Activated CD4-positive, alpha-beta memory T cell treated with anti-CD3 and anti-CD28 coated beads for 36 hours (primary cell): ENCODE measurements at regions of chr6 and their contacts with region 1.

Region 1: DNA sequence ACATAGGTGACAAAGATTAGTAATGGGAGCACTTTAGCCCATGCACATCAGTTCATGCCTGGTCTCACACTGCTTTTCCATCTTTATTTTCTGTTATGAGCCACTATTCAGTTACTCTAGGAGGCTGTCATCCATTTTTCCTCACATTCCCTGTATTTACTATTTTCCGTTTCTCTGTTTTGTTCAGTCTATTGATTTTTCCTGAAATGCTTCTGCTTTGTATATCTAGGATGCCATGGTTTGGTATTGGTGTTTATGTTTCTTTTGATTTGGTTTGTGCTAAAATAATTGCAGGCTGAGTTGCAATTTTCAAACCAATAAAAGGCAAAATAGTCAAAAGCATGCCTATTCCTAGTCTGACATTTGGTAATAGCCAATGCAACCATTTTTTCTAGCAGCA is 28.9 kb upstream of the ZNF292 start:
- DNase-seq: no peak
- H3K4me3 Mint-ChIP-seq: no peak overlapping the region
- H3K27ac Mint-ChIP-seq: no peak overlapping the region
- H3K4me1 Mint-ChIP-seq: no peaks in the 10 kb centered on the region
- H3K27me3 Mint-ChIP-seq: peaks cover 16% of the 10 kb centered on the region

Region 2: DNA sequence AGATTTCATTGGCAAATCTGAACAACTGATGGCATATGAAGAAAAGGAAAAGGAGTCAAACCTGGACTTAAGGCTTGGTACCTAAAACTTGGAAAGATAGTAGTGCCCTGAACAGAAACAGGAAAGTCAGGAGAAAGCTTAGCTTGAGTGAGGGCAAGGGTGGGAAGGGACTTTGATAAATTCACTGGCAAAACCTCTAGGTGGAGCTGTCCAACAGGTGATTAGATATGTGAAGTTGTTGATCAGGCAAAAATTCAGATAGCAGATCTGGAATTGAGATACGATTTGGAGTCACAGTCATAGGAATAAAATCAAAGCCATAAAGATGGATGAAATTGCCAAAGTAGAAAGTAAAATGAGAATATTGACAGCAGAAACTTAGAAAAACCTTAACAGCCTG is 12.7 kb after region 1 on chr6:
- CTCF ChIA-PET with region 1: interaction called, 13 read pairs
- POLR2A ChIA-PET with region 1: no interaction called
- intact Hi-C with region 1: no loop called
- DNase-seq: no peak
- H3K4me3 Mint-ChIP-seq: no peak overlapping the region
- H3K27ac Mint-ChIP-seq: no peak overlapping the region
- H3K4me1 Mint-ChIP-seq: peaks cover 2% of the 10 kb centered on the region
- H3K27me3 Mint-ChIP-seq: peaks cover 4% of the 10 kb centered on the region